ENCODE measurements at regions of chr12 and their contacts with region 1.

Region 1: GRCh38 chr12:45990468-45991283 is at the start of gene SCAF11:
- DNase-seq: peak; percentile 100
- H3K4me3 ChIP-seq: peak within 1 kb of the TSS; percentile 67 to 85
- H3K27ac ChIP-seq: peak within 1 kb of the TSS; percentile 98
- H3K4me1 ChIP-seq: peaks cover 20 to 27% of the 10 kb centered on the region in 2 donors
- H3K27me3 ChIP-seq: no peaks in the 10 kb centered on the region
- CTCF ChIP-seq: peak; percentile 94 to 99 (median 97)
- total RNA-seq, gene SCAF11: 35.7 TPM

Region 2: DNA sequence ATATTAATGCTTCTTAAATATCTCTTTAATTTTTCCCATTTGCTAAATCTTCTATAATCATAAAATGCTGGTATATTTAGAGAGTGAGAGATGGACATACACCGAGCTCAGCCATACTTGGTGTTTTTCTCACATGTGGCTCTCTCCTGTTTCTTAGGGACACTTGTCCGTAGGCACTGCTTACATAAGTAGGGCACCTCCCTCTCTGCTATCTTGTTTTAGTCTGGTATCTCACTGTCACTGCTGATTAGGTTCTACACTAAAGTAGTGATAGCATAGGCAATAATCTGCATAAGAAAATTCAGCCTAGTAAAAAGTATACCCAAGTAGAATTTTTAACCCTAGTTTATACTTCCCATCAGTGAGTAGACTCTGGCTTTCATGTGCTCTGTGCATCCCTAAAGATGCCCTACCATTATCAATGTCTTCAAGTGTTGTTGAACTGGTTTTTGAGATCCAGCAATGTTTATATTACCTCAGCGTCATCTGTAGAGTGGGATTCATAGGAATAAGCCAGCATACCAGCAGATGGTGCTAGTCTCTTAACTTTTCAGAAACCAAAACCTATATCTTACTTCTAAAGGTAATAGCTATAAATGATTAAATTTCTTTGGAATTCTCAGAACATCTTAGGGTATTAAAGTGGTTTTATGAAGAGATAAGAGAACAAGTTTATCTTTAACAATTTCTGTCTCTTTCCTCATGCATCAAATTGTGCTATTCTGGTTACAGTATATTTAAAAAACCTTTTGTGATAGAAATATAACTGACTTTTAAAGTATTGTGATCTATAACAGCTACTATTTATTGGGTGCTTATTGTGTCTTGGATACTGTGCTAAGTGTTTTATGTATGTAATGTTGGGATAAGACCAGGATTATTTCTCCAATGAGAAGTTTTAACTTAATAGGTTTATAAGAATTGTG is 228.2 kb before region 1 on chr12:
- intact Hi-C with region 1: loop called (anchors 5 kb)
- DNase-seq: no peak
- H3K4me3 ChIP-seq: no peak overlapping the region
- H3K27ac ChIP-seq: no peak overlapping the region
- H3K4me1 ChIP-seq: peaks cover 0 to 13% of the 10 kb centered on the region in 2 donors
- H3K27me3 ChIP-seq: no peaks in the 10 kb centered on the region
- CTCF ChIP-seq: peak in 2 of 3 experiments; percentile 26 to 58

Region 3: DNA sequence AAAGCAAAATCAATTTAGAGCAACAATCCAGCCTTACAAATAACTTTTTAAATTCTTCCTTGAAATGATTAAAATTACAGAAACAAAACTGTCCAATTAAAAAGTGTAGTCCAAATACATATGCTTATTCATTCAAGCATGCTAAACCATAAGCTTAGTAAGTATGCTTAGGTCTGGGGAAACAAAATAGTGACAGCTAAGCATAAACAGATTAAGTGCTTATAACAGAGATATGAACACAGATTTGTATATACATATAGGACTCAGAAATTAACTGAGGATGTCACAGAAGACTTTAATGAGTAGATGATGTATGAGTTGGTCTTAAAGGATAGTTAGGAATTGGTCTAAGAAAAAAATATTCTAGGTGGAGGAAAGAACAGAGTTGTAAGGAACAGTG is 42.1 kb before region 1 on chr12:
- intact Hi-C with region 1: no loop called
- DNase-seq: no peak
- H3K4me3 ChIP-seq: no peak overlapping the region
- H3K27ac ChIP-seq: no peak overlapping the region
- H3K4me1 ChIP-seq: no peaks in the 10 kb centered on the region
- H3K27me3 ChIP-seq: no peaks in the 10 kb centered on the region
- CTCF ChIP-seq: no peak

Region 4: GRCh38 chr12:46005151-46005797 is 14.6 kb after region 1 on chr12:
- intact Hi-C with region 1: no loop called
- DNase-seq: no peak
- H3K4me3 ChIP-seq: no peak overlapping the region
- H3K27ac ChIP-seq: no peak overlapping the region
- H3K4me1 ChIP-seq: no peaks in the 10 kb centered on the region
- H3K27me3 ChIP-seq: no peaks in the 10 kb centered on the region
- CTCF ChIP-seq: peak in 2 of 3 experiments; percentile 10 to 32

Region 5: GRCh38 chr12:46124848-46125619 is 134.4 kb after region 1 on chr12:
- intact Hi-C with region 1: loop called (anchors 5 kb)
- DNase-seq: peak in 1 of 2 donors; percentile 75
- H3K4me3 ChIP-seq: peak overlapping the region; percentile 18 to 44
- H3K27ac ChIP-seq: no peak overlapping the region
- H3K4me1 ChIP-seq: peaks cover 0 to 3% of the 10 kb centered on the region in 2 donors
- H3K27me3 ChIP-seq: no peaks in the 10 kb centered on the region
- CTCF ChIP-seq: peak; percentile 60 to 74 (median 72)

Region 6: GRCh38 chr12:46268590-46269558 is 278.2 kb after region 1 on chr12 and contains the start of gene SLC38A1:
- intact Hi-C with region 1: loop called (anchors 5 kb)
- DNase-seq: peak; percentile 75 to 91
- H3K4me3 ChIP-seq: peak within 1 kb of the TSS; percentile 65 to 77
- H3K27ac ChIP-seq: peak within 1 kb of the TSS; percentile 78 to 86
- H3K4me1 ChIP-seq: peaks cover 0 to 15% of the 10 kb centered on the region in 2 donors
- H3K27me3 ChIP-seq: no peaks in the 10 kb centered on the region
- CTCF ChIP-seq: no peak
- total RNA-seq, gene SLC38A1: 12.8 TPM

Region 7: GRCh38 chr12:46372544-46373110 is 382.0 kb after region 1 on chr12 and contains the start of gene SLC38A2:
- intact Hi-C with region 1: loop called (anchors 2 kb)
- DNase-seq: peak; percentile 90 to 99
- H3K4me3 ChIP-seq: peak within 1 kb of the TSS; percentile 94 to 98
- H3K27ac ChIP-seq: peak within 1 kb of the TSS; percentile 97 to 98
- H3K4me1 ChIP-seq: peaks cover 4 to 15% of the 10 kb centered on the region in 2 donors
- H3K27me3 ChIP-seq: no peaks in the 10 kb centered on the region
- CTCF ChIP-seq: no peak
- total RNA-seq, gene SLC38A2: 384 TPM

Measured in ascending aorta (tissue), 2 donors.